Activated CD4-positive, alpha-beta T cell treated with anti-CD3 and anti-CD28 coated beads for 36 hours (primary cell): ENCODE measurements at regions of chr19 and their contacts with region 1.

Region 1: GRCh38 chr19:5977785-5978605 is at the start of gene RANBP3:
- DNase-seq: peak; percentile 99
- ATAC-seq: peak; percentile 92
- H3K4me3 Mint-ChIP-seq: peak within 1 kb of the TSS; percentile 94
- H3K27ac Mint-ChIP-seq: peak within 1 kb of the TSS; percentile 90
- H3K4me1 Mint-ChIP-seq: peaks cover 56% of the 10 kb centered on the region
- H3K27me3 Mint-ChIP-seq: no peaks in the 10 kb centered on the region
- total RNA-seq, gene RANBP3: 85.5 to 103 TPM

Region 2: GRCh38 chr19:4723367-4724187 is 1254.4 kb before region 1 on chr19 and contains the start of gene DPP9:
- CTCF ChIA-PET with region 1: no interaction called
- POLR2A ChIA-PET with region 1: no interaction called
- intact Hi-C with region 1: loop called in 1 of 2 experiments (anchors 5 kb)
- DNase-seq: peak; percentile 98
- ATAC-seq: peak; percentile 95
- H3K4me3 Mint-ChIP-seq: peak within 1 kb of the TSS; percentile 92
- H3K27ac Mint-ChIP-seq: peak within 1 kb of the TSS; percentile 93
- H3K4me1 Mint-ChIP-seq: peaks cover 26% of the 10 kb centered on the region
- H3K27me3 Mint-ChIP-seq: no peaks in the 10 kb centered on the region
- total RNA-seq, gene DPP9: 49.2 to 51.3 TPM

Region 3: DNA sequence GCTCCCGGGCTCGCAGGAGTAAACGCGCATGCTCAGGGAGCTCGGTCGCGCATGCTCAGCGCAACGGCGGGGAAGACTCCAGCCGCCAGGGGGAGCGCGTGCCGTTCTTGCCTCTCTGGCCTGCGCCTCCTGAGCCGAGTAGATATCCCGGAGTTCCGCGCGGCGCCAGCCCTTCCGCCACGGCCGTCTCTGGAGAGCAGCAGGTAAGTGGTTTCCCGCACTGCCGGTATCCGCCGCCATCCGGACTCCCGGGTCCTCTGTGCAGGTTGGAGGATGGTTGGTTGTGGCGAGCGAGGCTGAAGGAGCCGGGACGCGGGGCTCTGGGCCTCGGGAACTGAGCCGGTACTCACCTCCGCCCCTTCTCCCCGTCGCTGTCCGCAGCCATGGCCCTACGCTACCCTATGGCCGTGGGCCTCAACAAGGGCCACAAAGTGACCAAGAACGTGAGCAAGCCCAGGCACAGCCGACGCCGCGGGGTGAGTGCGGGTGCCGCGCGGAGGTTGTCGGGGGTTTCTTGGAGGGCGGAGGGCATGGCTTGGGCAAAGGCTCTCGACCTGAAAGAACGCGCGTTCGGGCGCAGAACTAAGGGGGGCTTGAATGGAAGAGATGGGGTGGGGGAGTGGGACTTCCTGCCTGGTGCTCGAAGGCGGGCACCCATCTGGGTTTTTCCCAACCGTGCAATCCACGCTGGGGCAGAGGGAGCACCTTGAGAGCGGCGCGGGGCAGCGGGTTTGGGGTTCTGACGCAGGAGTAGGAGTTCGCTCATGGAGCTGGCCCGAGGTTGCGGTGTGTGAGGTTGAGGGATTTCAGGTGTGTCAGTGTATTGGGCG is 287.7 kb before region 1 on chr19 and contains the start of gene RPL36:
- CTCF ChIA-PET with region 1: no interaction called
- POLR2A ChIA-PET with region 1: no interaction called
- intact Hi-C with region 1: loop called in 1 of 2 experiments (anchors 1 kb)
- DNase-seq: peak; percentile 100
- ATAC-seq: peak; percentile 54
- H3K4me3 Mint-ChIP-seq: peak within 1 kb of the TSS; percentile 100
- H3K27ac Mint-ChIP-seq: peak within 1 kb of the TSS; percentile 96
- H3K4me1 Mint-ChIP-seq: peaks cover 21% of the 10 kb centered on the region
- H3K27me3 Mint-ChIP-seq: no peaks in the 10 kb centered on the region
- total RNA-seq, gene RPL36: 1,452 to 1,530 TPM

Region 4: DNA sequence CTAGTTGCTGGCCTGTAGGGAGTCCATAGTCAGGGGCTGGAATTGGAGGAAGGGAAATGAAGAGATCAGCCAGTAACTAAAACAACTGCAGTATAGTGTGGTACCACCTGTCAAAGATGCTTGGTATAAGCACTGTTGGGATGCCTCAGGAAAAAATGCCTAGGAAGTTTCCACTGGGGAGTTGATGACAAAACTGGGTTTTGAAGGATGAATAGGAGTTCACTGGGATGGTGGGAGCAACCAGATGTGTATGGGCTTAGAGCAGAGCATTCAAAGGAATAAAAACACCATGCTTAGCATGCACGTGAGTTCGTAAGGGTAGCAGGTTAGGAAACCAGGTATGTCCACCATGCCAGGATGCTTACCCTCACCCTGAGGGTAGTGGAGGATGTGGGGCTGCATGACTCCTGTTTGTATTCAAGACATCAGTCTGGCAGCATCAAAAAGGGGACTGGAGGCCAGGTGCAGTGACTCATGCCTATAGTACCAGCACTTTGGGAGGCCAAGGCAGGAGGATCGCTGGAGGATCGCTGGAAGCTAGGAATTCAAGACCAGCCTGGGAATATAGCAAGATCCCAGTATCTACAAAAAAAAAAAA is 250.4 kb before region 1 on chr19:
- CTCF ChIA-PET with region 1: no interaction called
- POLR2A ChIA-PET with region 1: no interaction called
- intact Hi-C with region 1: no loop called
- DNase-seq: no peak
- ATAC-seq: no peak
- H3K4me3 Mint-ChIP-seq: no peak overlapping the region
- H3K27ac Mint-ChIP-seq: no peak overlapping the region
- H3K4me1 Mint-ChIP-seq: no peaks in the 10 kb centered on the region
- H3K27me3 Mint-ChIP-seq: no peaks in the 10 kb centered on the region

Region 5: GRCh38 chr19:5827891-5828660 is 149.9 kb before region 1 on chr19:
- CTCF ChIA-PET with region 1: interaction called, 3 read pairs
- POLR2A ChIA-PET with region 1: no interaction called
- intact Hi-C with region 1: loop called in 1 of 2 experiments (anchors 1 kb)
- DNase-seq: peak; percentile 98
- ATAC-seq: peak; percentile 84
- H3K4me3 Mint-ChIP-seq: peak overlapping the region; percentile 92
- H3K27ac Mint-ChIP-seq: peak overlapping the region; percentile 96
- H3K4me1 Mint-ChIP-seq: peaks cover 4% of the 10 kb centered on the region
- H3K27me3 Mint-ChIP-seq: no peaks in the 10 kb centered on the region

Region 6: DNA sequence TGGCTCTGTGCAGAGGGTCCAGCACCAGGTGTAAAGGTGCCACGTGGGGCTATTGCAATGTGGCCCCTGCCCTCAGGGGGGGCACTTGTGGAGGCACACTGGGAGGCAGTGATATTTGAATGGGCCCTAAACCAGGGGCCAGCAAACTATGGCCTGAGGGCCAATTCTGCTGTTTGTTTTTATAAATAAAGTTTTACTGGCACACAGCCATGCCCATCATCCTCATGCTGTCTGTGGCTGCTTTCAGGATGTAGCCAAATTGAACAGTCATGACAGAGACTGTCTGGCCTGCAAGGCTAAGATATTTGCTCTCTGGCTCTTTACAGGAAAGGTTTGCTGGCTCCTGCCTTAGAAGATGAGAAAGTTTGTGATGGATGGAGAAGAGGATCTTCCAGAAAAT is 33.8 kb after region 1 on chr19:
- CTCF ChIA-PET with region 1: no interaction called
- POLR2A ChIA-PET with region 1: no interaction called
- intact Hi-C with region 1: no loop called
- DNase-seq: no peak
- ATAC-seq: no peak
- H3K4me3 Mint-ChIP-seq: no peak overlapping the region
- H3K27ac Mint-ChIP-seq: no peak overlapping the region
- H3K4me1 Mint-ChIP-seq: no peaks in the 10 kb centered on the region
- H3K27me3 Mint-ChIP-seq: no peaks in the 10 kb centered on the region

Region 7: GRCh38 chr19:6199240-6199983 is 221.4 kb after region 1 on chr19:
- CTCF ChIA-PET with region 1: no interaction called
- POLR2A ChIA-PET with region 1: no interaction called
- intact Hi-C with region 1: loop called in 1 of 2 experiments (anchors 1 kb)
- DNase-seq: peak; percentile 100
- ATAC-seq: peak; percentile 95
- H3K4me3 Mint-ChIP-seq: peak overlapping the region; percentile 100
- H3K27ac Mint-ChIP-seq: peak overlapping the region; percentile 92
- H3K4me1 Mint-ChIP-seq: peaks cover 12% of the 10 kb centered on the region
- H3K27me3 Mint-ChIP-seq: no peaks in the 10 kb centered on the region

Region 8: DNA sequence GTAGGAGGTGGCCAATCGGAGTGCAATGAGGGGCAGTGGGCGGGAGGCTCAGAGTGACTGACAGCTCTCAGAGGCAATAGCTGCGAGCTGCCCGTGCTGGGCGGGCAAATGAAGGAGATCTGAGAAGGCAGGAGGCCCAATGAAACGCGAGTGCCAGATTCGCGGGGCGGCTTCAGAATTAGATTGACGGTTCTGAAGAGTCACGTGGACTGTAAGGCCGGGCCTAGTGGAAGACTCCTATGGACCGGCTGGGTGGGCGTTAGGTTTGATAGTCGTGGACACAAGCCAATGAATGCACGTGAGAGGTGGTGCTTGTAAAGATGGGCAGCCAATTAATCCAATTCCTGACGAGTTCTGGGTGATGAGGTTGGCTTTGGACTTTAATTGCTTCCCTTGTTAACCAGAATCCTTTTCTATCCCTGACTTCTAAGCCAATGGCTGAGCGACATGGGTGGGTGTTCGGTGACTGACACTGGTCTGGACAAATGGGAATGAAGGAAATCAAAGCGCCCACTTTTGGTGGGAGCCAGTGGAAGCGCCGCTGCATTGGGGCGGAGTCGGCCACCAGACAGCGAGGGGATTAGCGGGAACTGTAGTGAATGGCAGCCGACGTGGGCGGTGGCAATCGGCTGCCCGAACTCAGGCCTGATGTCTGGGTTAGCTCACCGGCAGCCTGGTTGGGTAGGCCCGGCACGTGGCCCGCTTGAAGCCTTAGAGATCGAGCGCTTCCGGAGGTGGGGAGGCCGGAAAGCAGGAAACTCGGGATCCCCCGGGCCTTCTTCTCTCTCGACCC is 447.1 kb after region 1 on chr19:
- CTCF ChIA-PET with region 1: no interaction called
- POLR2A ChIA-PET with region 1: interaction called, 3 read pairs
- intact Hi-C with region 1: loop called in 1 of 2 experiments (anchors 1 kb)
- DNase-seq: peak; percentile 100
- ATAC-seq: peak; percentile 88
- H3K4me3 Mint-ChIP-seq: peak overlapping the region; percentile 73
- H3K27ac Mint-ChIP-seq: peak overlapping the region; percentile 98
- H3K4me1 Mint-ChIP-seq: peaks cover 31% of the 10 kb centered on the region
- H3K27me3 Mint-ChIP-seq: no peaks in the 10 kb centered on the region